ENCODE measurements at regions of chr22 and their contacts with region 1.

Region 1: DNA sequence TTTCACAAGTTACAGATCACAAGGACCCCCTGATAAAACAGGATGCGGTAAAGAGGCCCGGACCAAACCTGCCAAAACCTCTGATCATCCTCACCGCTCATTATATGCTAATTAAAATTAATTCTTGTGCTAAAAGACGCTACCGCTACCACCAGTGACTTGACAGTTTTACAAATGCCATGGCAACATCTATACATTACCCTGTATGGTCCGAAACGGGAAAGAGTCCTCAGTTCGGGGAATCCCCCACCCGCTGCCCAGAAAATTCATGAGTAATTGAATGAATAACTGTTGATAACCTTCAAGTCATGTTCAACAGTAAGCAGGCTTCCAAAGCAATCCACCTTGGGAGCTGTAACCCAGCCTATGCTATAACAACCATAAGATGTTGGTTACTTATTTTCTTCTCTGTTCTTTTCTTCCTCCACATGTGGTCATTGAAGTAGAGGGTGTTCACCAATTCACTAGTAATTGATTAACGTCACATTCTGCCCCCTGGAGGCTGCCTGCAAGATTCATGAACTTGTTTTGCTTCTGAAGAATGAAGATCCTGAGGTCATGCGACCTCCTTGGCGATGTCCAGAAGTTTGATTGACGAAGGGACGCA is 20.6 kb downstream of the APOBEC3H start:
- DNase-seq: peak; percentile 53
- H3K4me3 Mint-ChIP-seq: peak overlapping the region; percentile 45
- H3K27ac Mint-ChIP-seq: peak overlapping the region; percentile 86
- H3K4me1 Mint-ChIP-seq: peaks cover 61% of the 10 kb centered on the region
- H3K27me3 Mint-ChIP-seq: no peaks in the 10 kb centered on the region

Region 2: DNA sequence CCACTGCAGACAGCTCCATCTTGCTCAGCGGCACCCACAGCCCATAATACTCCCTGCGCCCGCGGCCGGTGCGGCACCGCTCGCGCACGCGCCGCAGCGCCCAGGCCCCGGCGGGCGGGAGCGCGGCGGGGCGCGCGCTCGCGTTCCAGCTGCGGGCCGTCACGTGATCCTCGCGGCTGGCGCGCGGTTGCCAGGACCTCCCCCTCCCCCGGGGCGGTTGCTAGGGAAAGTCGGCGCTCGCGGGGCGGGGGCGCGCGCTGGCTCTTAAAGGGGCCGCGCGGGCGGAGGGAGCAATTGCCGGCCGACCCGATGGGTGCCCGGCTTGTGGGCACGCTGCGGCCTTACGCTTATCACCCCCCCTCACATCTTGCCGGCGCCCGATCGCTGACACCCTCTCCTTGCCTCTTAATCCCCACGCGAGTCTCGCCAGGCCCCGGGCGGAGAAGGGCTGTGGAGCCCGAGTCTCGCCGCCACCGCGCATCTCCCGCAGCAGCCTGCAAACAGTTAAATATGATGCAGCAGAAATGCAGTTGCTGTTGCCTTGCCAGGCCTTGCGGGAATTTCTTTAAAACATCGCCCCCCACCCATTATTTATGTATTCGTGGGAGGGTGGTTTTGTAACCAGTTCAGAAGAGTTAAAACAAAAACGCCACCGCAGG is 245.4 kb before region 1 on chr22 and contains the start of gene CBX6:
- intact Hi-C with region 1: loop called (anchors 1 kb)
- DNase-seq: peak; percentile 94
- H3K4me3 Mint-ChIP-seq: peak within 1 kb of the TSS; percentile 89
- H3K27ac Mint-ChIP-seq: peak within 1 kb of the TSS; percentile 91
- H3K4me1 Mint-ChIP-seq: peaks cover 59% of the 10 kb centered on the region
- H3K27me3 Mint-ChIP-seq: peaks cover 2% of the 10 kb centered on the region
- total RNA-seq, gene CBX6: 171 and 178 TPM in 2 replicates

Region 3: GRCh38 chr22:38973289-38974169 is 144.2 kb before region 1 on chr22:
- intact Hi-C with region 1: no loop called
- DNase-seq: peak; percentile 49
- H3K4me3 Mint-ChIP-seq: no peak overlapping the region
- H3K27ac Mint-ChIP-seq: no peak overlapping the region
- H3K4me1 Mint-ChIP-seq: peaks cover 18% of the 10 kb centered on the region
- H3K27me3 Mint-ChIP-seq: peaks cover 23% of the 10 kb centered on the region

Region 4: GRCh38 chr22:39013942-39014722 is 103.6 kb before region 1 on chr22 and contains the start of gene APOBEC3C:
- intact Hi-C with region 1: loop called (anchors 2 kb)
- DNase-seq: peak; percentile 80
- H3K4me3 Mint-ChIP-seq: peak within 1 kb of the TSS; percentile 98
- H3K27ac Mint-ChIP-seq: peak within 1 kb of the TSS; percentile 91
- H3K4me1 Mint-ChIP-seq: peaks cover 25% of the 10 kb centered on the region
- H3K27me3 Mint-ChIP-seq: peaks cover 4% of the 10 kb centered on the region
- total RNA-seq, gene APOBEC3C: 71.5 and 73.2 TPM in 2 replicates

Region 5: GRCh38 chr22:39080052-39080762 is 37.5 kb before region 1 on chr22:
- intact Hi-C with region 1: loop called (anchors 1 kb)
- DNase-seq: no peak
- H3K4me3 Mint-ChIP-seq: peak overlapping the region; percentile 19
- H3K27ac Mint-ChIP-seq: peak overlapping the region; percentile 55
- H3K4me1 Mint-ChIP-seq: peaks cover 53% of the 10 kb centered on the region
- H3K27me3 Mint-ChIP-seq: no peaks in the 10 kb centered on the region

Region 6: GRCh38 chr22:39097098-39098020 is 20.3 kb before region 1 on chr22 and contains the start of gene APOBEC3H:
- intact Hi-C with region 1: loop called (anchors 1 kb)
- DNase-seq: peak; percentile 32
- H3K4me3 Mint-ChIP-seq: peak within 1 kb of the TSS; percentile 83
- H3K27ac Mint-ChIP-seq: peak within 1 kb of the TSS; percentile 96
- H3K4me1 Mint-ChIP-seq: peaks cover 78% of the 10 kb centered on the region
- H3K27me3 Mint-ChIP-seq: no peaks in the 10 kb centered on the region
- total RNA-seq, gene APOBEC3H: 5.0 and 7.4 TPM in 2 replicates

Region 7: GRCh38 chr22:39155421-39155820 is 37.7 kb after region 1 on chr22:
- intact Hi-C with region 1: no loop called
- DNase-seq: no peak
- H3K4me3 Mint-ChIP-seq: no peak overlapping the region
- H3K27ac Mint-ChIP-seq: no peak overlapping the region
- H3K4me1 Mint-ChIP-seq: peaks cover 18% of the 10 kb centered on the region
- H3K27me3 Mint-ChIP-seq: peaks cover 23% of the 10 kb centered on the region

Measured in activated T-helper 1 cell treated with anti-CD3 and anti-CD28 coated beads, Interleukin-12 subunit alpha, Interleukin-12 subunit beta, Interleukin-2, Interleukin-4 antibody, amounts not matched to agents 30 ng/mL and 10 ng/mL and 1 ng/mL, durations not matched to agents 14 hours and 24 hours and 36 hours (primary cell).